Mammary epithelial cell (primary cell): ENCODE measurements at regions of chr11 and their contacts with region 1.

Region 1: GRCh38 chr11:19628018-19628417 is 84.6 kb upstream of the NAV2 start:
- DNase-seq: peak; percentile 68
- H3K4me3 ChIP-seq: no peak overlapping the region
- H3K27ac ChIP-seq: peak overlapping the region; percentile 67
- H3K4me1 ChIP-seq: peaks cover 35% of the 10 kb centered on the region
- H3K27me3 ChIP-seq: no peaks in the 10 kb centered on the region
- CTCF ChIP-seq: peak in 1 of 2 donors; percentile 1

Region 2: DNA sequence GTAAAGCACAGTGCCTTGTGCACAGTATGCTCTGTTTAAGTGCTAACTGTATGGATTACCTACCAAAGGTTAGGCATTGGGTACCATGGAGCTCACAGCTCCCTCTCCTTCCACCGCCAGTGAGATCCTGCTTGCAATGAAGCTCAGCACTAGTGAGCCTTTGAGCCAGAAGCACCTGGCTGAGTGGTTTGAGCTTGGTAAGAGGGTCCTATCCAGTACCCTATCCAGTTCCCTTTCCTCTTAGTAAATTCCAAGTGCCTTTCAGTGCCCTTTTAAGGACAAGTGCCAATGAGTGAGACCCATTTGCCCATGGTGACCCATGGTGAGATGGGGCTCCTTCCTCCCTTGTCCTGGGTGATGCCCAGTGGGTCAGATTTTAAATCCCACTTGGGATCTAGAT is 41.5 kb after region 1 on chr11:
- CTCF ChIA-PET with region 1: no interaction called
- dilution Hi-C with region 1: no loop called
- in situ Hi-C with region 1: no loop called
- intact Hi-C with region 1: loop called (anchors 2 kb)
- DNase-seq: no peak
- H3K4me3 ChIP-seq: no peak overlapping the region
- H3K27ac ChIP-seq: peak overlapping the region; percentile 82
- H3K4me1 ChIP-seq: peaks cover 66% of the 10 kb centered on the region
- H3K27me3 ChIP-seq: no peaks in the 10 kb centered on the region
- CTCF ChIP-seq: no peak

Region 3: GRCh38 chr11:19679952-19680828 is 52.2 kb after region 1 on chr11:
- CTCF ChIA-PET with region 1: no interaction called
- dilution Hi-C with region 1: no loop called
- in situ Hi-C with region 1: no loop called
- intact Hi-C with region 1: loop called (anchors 2 kb)
- DNase-seq: peak; percentile 97
- H3K4me3 ChIP-seq: no peak overlapping the region
- H3K27ac ChIP-seq: peak overlapping the region; percentile 77
- H3K4me1 ChIP-seq: peaks cover 40% of the 10 kb centered on the region
- H3K27me3 ChIP-seq: no peaks in the 10 kb centered on the region
- CTCF ChIP-seq: peak in 1 of 2 donors; percentile 7

Region 4: GRCh38 chr11:19753451-19754106 is 125.6 kb after region 1 on chr11:
- CTCF ChIA-PET with region 1: no interaction called
- dilution Hi-C with region 1: no loop called
- in situ Hi-C with region 1: no loop called
- intact Hi-C with region 1: no loop called
- DNase-seq: no peak
- H3K4me3 ChIP-seq: no peak overlapping the region
- H3K27ac ChIP-seq: no peak overlapping the region
- H3K4me1 ChIP-seq: no peaks in the 10 kb centered on the region
- H3K27me3 ChIP-seq: no peaks in the 10 kb centered on the region
- CTCF ChIP-seq: no peak